Activated CD8-positive, alpha-beta T cell treated with anti-CD3 and anti-CD28 coated beads for 36 hours (primary cell): ENCODE measurements at regions of chr2 and their contacts with region 1.

Region 1: GRCh38 chr2:42169100-42169873 is at the start of gene EML4:
- DNase-seq: peak; percentile 92
- ATAC-seq: peak; percentile 90
- H3K4me3 Mint-ChIP-seq: no peak within 1 kb of the TSS
- H3K27ac Mint-ChIP-seq: no peak within 1 kb of the TSS
- H3K4me1 Mint-ChIP-seq: peaks cover 22% of the 10 kb centered on the region
- H3K27me3 Mint-ChIP-seq: no peaks in the 10 kb centered on the region
- CTCF ChIP-seq: no peak
- total RNA-seq, gene EML4: 58.2 to 59.7 TPM

Region 2: GRCh38 chr2:41989501-41990180 is 179.6 kb before region 1 on chr2:
- CTCF ChIA-PET with region 1: no interaction called
- POLR2A ChIA-PET with region 1: no interaction called
- intact Hi-C with region 1: no loop called
- DNase-seq: no peak
- ATAC-seq: no peak
- H3K4me3 Mint-ChIP-seq: no peak overlapping the region
- H3K27ac Mint-ChIP-seq: no peak overlapping the region
- H3K4me1 Mint-ChIP-seq: peaks cover 2% of the 10 kb centered on the region
- H3K27me3 Mint-ChIP-seq: peaks cover 9% of the 10 kb centered on the region
- CTCF ChIP-seq: no peak

Region 3: GRCh38 chr2:42132966-42133641 is 36.2 kb before region 1 on chr2:
- CTCF ChIA-PET with region 1: interaction called, 10 read pairs
- POLR2A ChIA-PET with region 1: interaction called, 17 read pairs
- intact Hi-C with region 1: loop called (anchors 5 kb)
- DNase-seq: peak; percentile 97
- ATAC-seq: peak; percentile 91
- H3K4me3 Mint-ChIP-seq: peak overlapping the region; percentile 75
- H3K27ac Mint-ChIP-seq: peak overlapping the region; percentile 97
- H3K4me1 Mint-ChIP-seq: peaks cover 78% of the 10 kb centered on the region
- H3K27me3 Mint-ChIP-seq: no peaks in the 10 kb centered on the region
- CTCF ChIP-seq: no peak

Region 4: GRCh38 chr2:42196403-42197267 is 27.3 kb after region 1 on chr2:
- CTCF ChIA-PET with region 1: interaction called, 15 read pairs
- POLR2A ChIA-PET with region 1: interaction called, 4 read pairs
- intact Hi-C with region 1: no loop called
- DNase-seq: peak; percentile 46
- ATAC-seq: peak; percentile 56
- H3K4me3 Mint-ChIP-seq: no peak overlapping the region
- H3K27ac Mint-ChIP-seq: peak overlapping the region; percentile 24
- H3K4me1 Mint-ChIP-seq: peaks cover 67% of the 10 kb centered on the region
- H3K27me3 Mint-ChIP-seq: no peaks in the 10 kb centered on the region
- CTCF ChIP-seq: peak; percentile 76